Left cardiac atrium (tissue), 4 donors: ENCODE measurements at regions of chr15 and their contacts with region 1.

Region 1: GRCh38 chr15:93030430-93031105 is 58.4 kb downstream of the RGMA start:
- DNase-seq: peak; percentile 62
- ATAC-seq: peak; percentile 55 to 65

Region 2: DNA sequence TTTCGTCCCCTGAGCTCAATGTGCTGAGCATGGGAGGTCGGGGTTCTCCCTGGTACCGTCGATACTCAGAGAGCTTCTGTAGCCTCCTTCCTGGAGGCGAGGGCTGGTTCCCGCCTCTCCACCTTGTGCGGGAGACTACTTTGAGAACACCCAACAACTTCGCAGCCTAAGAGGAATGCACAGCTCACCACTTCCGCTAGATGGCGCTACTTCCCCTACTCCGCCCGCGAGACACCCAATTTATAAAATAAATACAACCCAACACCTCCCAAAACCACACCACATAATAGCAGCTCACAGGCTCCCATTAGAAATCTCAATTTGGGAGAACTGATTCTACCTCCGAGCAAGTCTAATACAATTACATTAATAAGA is 57.2 kb after region 1 on chr15:
- intact Hi-C with region 1: loop called in 1 of 2 experiments (anchors 5 kb)
- DNase-seq: peak; percentile 69
- ATAC-seq: peak; percentile 75 to 83

Region 3: DNA sequence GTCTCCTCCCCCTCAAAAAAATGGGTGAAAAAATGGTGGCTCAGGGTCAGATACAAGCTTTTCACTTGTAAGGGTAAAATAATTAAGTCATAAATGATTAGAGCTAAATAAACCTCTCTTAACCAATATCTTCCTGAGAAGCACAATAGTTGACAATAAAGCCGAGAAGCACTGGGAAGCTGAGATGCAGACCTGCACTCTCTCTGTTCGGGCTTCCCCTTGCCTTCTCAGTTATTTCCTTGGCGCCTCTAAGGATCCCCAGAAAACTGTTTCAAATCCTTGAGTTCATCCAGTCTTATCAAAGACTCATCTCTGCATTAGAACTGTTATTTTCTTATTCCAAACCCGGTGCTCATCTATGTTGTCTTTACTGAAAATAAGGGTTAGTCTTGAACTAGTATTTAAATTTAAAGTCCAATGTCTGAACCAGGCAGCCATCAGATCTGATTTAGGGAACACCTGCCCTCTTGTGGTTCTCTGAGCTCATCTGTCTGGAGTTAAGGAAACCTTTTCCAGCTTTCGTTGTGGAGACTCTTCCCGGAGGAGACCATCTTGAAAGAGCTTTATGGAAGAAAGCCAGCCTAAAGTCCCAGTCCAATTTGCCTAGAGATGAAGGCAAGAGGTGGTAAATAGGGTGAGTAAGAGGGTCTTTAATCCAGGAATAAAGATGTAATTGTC is 944.4 kb after region 1 on chr15:
- intact Hi-C with region 1: loop called in 1 of 2 experiments (anchors 5 kb)
- DNase-seq: no peak
- ATAC-seq: peak in 1 of 2 donors; percentile 49

Region 4: DNA sequence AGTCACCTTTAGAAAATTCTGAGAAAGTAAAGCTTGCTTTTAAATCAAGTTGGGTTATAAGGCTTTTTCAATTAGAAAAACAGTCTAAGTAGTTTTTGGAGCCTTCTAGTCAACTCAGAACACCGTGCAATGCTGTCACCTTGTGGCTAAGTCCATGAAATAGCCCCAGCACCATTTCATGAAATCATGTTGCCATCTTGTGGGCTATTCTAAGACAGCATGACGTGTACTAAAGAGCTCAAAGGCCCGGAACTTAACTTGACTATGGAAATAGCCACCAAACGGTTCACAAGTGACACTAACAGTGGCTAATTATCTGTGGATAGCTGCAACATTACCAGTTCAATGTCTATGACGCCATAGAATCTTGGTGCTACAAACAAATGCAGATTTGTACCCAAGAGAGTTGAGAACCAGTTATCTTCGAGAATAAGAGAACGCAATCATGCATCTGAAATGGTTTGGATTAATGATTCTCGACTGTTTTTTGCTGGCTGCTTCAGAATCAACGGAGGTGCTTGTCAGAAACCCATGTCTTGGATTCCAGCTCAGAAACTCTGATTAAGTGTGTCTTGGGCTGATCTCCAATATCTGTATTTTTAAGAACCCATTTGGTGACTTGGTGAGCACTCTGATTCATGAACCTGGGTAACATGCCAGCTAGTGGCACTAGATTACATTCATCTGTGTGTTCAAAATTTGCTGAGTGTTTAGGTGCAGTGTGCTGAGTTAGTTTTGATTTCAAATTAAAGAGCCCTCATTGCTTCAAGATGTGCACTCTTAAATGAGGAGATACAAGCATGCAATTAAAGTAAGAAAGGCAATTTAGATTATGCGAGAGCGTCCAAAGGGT is 1089.6 kb after region 1 on chr15:
- intact Hi-C with region 1: loop called in 1 of 2 experiments (anchors 2 kb)
- DNase-seq: peak; percentile 40
- ATAC-seq: peak; percentile 95

Region 5: GRCh38 chr15:94317201-94317600 is 1286.6 kb after region 1 on chr15:
- intact Hi-C with region 1: loop called in 1 of 2 experiments (anchors 10 kb)
- DNase-seq: no peak
- ATAC-seq: no peak